ENCODE measurements at regions of chr1 and their contacts with region 1.

Region 1: DNA sequence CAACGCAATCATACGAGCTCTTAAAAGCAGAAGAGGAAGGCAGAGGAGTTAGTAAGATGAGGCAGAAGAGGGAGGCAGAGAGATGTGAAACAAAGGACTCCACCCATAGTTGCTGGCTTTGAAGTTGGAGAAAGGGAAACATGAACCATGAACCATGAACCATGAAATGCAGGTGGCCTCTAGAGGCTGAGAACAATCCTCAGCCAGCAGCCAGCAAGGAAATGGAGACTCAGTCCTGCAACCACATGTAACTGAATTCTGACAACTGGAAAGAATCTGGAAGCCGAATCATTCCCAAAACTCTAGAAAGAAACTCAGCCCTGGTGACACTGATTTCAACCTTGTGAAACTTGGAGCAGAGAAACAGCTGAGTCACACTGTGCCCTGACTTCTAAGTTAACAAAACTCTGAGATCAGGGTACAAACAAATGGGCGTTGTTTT is 10.1 kb downstream of the DIPK1A start:
- DNase-seq: peak in 4 of 14 experiments; percentile 49 to 75 (median 71)
- ATAC-seq: peak; percentile 92
- H3K4me3 ChIP-seq: no peak overlapping the region
- H3K4me3 Mint-ChIP-seq: no peak overlapping the region
- H3K27ac ChIP-seq: no peak overlapping the region
- H3K27ac Mint-ChIP-seq: no peak overlapping the region
- H3K4me1 ChIP-seq: peaks cover 30% of the 10 kb centered on the region
- H3K4me1 Mint-ChIP-seq: peaks cover 45% of the 10 kb centered on the region
- H3K27me3 ChIP-seq: no peaks in the 10 kb centered on the region
- H3K27me3 Mint-ChIP-seq: no peaks in the 10 kb centered on the region
- CTCF ChIP-seq: peak; percentile 23

Region 2: GRCh38 chr1:92909321-92909720 is 41.8 kb before region 1 on chr1:
- CTCF ChIA-PET with region 1: interaction called, 3 read pairs
- POLR2A ChIA-PET with region 1: no interaction called
- intact Hi-C with region 1: loop called in 1 of 2 experiments (anchors 5 kb)
- DNase-seq: no peak
- ATAC-seq: no peak
- H3K4me3 ChIP-seq: no peak overlapping the region
- H3K4me3 Mint-ChIP-seq: no peak overlapping the region
- H3K27ac ChIP-seq: no peak overlapping the region
- H3K27ac Mint-ChIP-seq: no peak overlapping the region
- H3K4me1 ChIP-seq: no peaks in the 10 kb centered on the region
- H3K4me1 Mint-ChIP-seq: peaks cover 58% of the 10 kb centered on the region
- H3K27me3 ChIP-seq: no peaks in the 10 kb centered on the region
- H3K27me3 Mint-ChIP-seq: no peaks in the 10 kb centered on the region
- CTCF ChIP-seq: no peak